ENCODE measurements at regions of chr3 and their contacts with region 1.

Region 1: DNA sequence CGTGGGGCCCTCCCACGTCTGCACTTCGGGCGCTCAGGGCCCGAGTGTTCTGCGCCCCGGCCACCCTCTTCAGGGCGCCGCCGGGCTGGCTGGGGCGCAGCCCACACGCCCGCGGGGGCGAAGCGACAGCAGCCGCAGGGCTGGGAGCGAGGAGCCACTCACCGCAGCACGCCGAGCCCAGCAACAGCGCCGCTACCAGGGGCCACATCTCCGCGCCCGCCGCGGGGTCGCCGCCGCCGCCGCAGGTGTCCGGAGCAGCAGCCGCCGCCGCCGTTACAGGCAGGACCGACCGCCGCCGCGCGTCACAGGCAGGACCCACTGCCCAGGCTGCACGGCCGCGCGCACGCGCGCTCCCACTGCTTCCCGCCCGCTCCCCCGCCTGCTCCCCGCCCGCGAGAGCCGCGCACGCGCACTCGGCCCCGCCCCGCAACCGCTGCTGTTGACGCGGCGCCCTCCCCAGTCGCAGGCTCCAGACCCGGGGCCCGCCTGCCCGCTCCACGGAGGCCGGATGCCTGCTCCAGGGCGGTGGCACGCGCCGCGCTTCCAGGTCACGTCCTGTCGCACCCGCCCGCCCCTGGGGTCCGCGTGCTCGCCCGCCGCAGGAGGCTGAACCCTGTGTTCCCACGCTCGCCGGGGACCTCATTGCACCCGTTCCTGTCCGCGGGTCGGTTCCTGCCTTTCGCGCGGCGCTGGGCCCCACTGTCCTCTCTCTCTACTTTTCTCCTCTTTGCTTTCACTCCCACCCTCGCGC is at the start of gene CD47:
- DNase-seq: peak; percentile 97
- H3K4me3 Mint-ChIP-seq: peak within 1 kb of the TSS; percentile 93
- H3K27ac Mint-ChIP-seq: peak within 1 kb of the TSS; percentile 95
- H3K4me1 Mint-ChIP-seq: peaks cover 30% of the 10 kb centered on the region
- H3K27me3 Mint-ChIP-seq: no peaks in the 10 kb centered on the region
- total RNA-seq, gene CD47: 122 to 124 TPM

Region 2: GRCh38 chr3:107938143-107938542 is 152.7 kb before region 1 on chr3:
- CTCF ChIA-PET with region 1: no interaction called
- POLR2A ChIA-PET with region 1: interaction called, 5 read pairs
- intact Hi-C with region 1: loop called (anchors 1 kb)
- DNase-seq: peak; percentile 20
- H3K4me3 Mint-ChIP-seq: no peak overlapping the region
- H3K27ac Mint-ChIP-seq: no peak overlapping the region
- H3K4me1 Mint-ChIP-seq: peaks cover 18% of the 10 kb centered on the region
- H3K27me3 Mint-ChIP-seq: no peaks in the 10 kb centered on the region

Region 3: DNA sequence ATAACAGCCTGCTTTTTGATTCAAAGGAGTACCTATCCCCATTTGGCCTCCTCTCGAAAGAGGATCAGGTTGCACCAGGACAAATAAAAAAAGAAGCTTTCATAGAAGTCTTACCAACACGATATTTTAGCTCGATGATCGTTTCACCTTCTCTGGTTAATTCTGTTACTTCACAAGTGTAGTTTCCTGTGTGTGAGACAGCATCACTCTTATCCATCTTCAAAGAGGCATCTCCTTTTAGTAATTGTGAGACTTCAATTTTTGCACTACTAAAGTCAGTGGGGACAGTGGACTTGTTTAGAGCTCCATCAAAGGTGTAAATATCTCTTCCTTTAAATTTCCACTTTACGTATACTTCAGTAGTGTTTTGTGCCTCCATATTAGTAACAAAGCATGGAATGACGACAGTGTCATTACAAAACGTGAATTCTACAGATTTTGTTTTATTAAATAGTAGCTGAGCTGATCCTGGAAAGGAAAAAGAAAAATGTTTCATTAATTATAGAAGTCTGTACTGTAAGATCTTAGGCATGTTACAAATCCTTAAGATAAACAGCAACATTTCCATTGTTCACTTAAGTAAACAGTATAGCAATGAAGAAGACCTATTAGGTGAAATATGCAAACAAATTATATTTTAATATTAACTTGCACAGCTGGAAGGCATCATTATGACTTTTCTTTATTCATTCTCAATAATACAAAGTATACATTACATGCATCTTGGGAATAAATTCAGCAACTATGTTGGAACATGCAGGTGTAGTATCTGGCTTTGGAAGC is 10.8 kb before region 1 on chr3:
- CTCF ChIA-PET with region 1: no interaction called
- POLR2A ChIA-PET with region 1: interaction called, 3 read pairs
- intact Hi-C with region 1: loop called (anchors 1 kb)
- DNase-seq: no peak
- H3K4me3 Mint-ChIP-seq: no peak overlapping the region
- H3K27ac Mint-ChIP-seq: peak overlapping the region; percentile 50
- H3K4me1 Mint-ChIP-seq: peaks cover 25% of the 10 kb centered on the region
- H3K27me3 Mint-ChIP-seq: no peaks in the 10 kb centered on the region

Region 4: GRCh38 chr3:108124337-108125152 is 33.7 kb after region 1 on chr3:
- CTCF ChIA-PET with region 1: interaction called, 7 read pairs
- POLR2A ChIA-PET with region 1: interaction called, 147 read pairs
- intact Hi-C with region 1: loop called (anchors 1 kb)
- DNase-seq: peak; percentile 84
- H3K4me3 Mint-ChIP-seq: peak overlapping the region; percentile 91
- H3K27ac Mint-ChIP-seq: peak overlapping the region; percentile 99
- H3K4me1 Mint-ChIP-seq: peaks cover 55% of the 10 kb centered on the region
- H3K27me3 Mint-ChIP-seq: no peaks in the 10 kb centered on the region

Region 5: DNA sequence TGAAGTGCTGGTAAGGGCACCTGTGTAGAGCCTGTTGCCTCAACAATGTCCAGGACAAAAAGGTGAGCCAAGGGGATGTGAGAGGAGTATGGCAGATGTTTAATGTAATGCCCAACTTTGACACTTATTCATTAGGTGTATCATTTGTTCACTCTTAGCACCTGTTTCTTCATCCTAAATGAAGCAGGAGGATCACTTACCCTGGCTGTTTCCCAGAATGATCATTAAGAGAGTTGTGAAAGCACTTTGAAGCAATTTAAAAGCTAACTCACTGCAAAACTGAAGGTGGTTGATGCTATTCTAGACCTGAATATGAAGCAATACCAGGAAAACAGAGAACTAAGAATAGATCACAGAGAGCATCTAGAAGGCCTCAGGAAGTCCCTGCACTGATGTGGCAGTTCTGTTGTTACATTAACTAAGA is 202.0 kb after region 1 on chr3:
- CTCF ChIA-PET with region 1: no interaction called
- POLR2A ChIA-PET with region 1: interaction called, 7 read pairs
- intact Hi-C with region 1: loop called (anchors 2 kb)
- DNase-seq: peak; percentile 23
- H3K4me3 Mint-ChIP-seq: peak overlapping the region; percentile 31
- H3K27ac Mint-ChIP-seq: peak overlapping the region; percentile 38
- H3K4me1 Mint-ChIP-seq: peaks cover 48% of the 10 kb centered on the region
- H3K27me3 Mint-ChIP-seq: no peaks in the 10 kb centered on the region

Region 6: GRCh38 chr3:108311797-108312196 is 220.9 kb after region 1 on chr3:
- CTCF ChIA-PET with region 1: no interaction called
- POLR2A ChIA-PET with region 1: no interaction called
- intact Hi-C with region 1: no loop called
- DNase-seq: no peak
- H3K4me3 Mint-ChIP-seq: no peak overlapping the region
- H3K27ac Mint-ChIP-seq: no peak overlapping the region
- H3K4me1 Mint-ChIP-seq: no peaks in the 10 kb centered on the region
- H3K27me3 Mint-ChIP-seq: peaks cover 2% of the 10 kb centered on the region

Region 7: DNA sequence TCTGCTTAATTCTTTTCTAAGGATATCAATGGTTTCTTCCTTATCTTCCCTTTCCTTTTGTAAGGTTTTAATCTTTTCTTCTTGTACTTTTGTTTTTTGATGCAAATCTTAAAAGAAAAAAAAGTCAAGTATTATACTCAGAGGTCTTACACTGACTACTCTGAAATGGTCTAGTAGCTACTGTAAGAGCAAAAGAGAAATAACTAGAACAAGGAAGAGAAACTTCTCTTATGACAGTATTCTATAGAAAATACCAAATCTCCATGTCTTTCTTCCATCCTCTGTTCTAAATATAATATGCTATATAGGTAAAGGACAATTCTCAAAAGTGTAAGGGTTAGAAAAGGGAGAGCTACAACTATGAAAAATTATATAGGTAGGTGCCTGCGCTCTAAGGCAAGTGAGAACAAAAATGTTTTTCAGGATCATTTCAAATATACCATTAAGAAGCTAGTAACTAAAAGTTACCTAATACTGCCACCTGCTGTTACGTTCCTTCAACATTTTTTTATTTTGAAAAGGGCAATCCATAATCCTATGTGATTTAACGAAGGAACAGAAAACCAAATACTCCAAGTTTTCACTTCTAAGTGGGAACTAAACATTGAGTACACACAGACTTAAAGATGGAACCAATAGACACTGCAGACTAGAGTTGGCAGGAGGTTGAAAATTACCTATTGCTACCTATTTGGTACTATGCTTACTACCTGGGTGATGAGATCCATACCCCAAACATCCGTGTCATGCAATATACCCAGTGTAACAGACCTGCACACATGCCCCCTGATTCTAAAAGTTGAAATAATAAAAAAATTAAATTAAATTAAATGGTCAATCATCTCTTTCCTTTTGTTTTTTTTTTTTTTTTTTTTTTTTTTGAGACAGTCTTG is 461.6 kb after region 1 on chr3:
- CTCF ChIA-PET with region 1: no interaction called
- POLR2A ChIA-PET with region 1: no interaction called
- intact Hi-C with region 1: no loop called
- DNase-seq: no peak
- H3K4me3 Mint-ChIP-seq: no peak overlapping the region
- H3K27ac Mint-ChIP-seq: no peak overlapping the region
- H3K4me1 Mint-ChIP-seq: peaks cover 8% of the 10 kb centered on the region
- H3K27me3 Mint-ChIP-seq: no peaks in the 10 kb centered on the region

Region 8: GRCh38 chr3:108818404-108818803 is 727.5 kb after region 1 on chr3:
- CTCF ChIA-PET with region 1: no interaction called
- POLR2A ChIA-PET with region 1: interaction called, 3 read pairs
- intact Hi-C with region 1: loop called (anchors 5 kb)
- DNase-seq: peak; percentile 77
- H3K4me3 Mint-ChIP-seq: peak overlapping the region; percentile 35
- H3K27ac Mint-ChIP-seq: peak overlapping the region; percentile 59
- H3K4me1 Mint-ChIP-seq: peaks cover 29% of the 10 kb centered on the region
- H3K27me3 Mint-ChIP-seq: no peaks in the 10 kb centered on the region

Measured in activated CD4-positive, alpha-beta memory T cell treated with anti-CD3 and anti-CD28 coated beads for 36 hours (primary cell).